Transverse colon (tissue), 4 donors: ENCODE measurements at regions of chr2 and their contacts with region 1.

Region 1: GRCh38 chr2:172102391-172103278 is at the start of gene DLX2:
- DNase-seq: peak; percentile 86
- H3K4me3 ChIP-seq: peak within 1 kb of the TSS; percentile 22 to 63 (median 42)
- H3K27ac ChIP-seq: no peak within 1 kb of the TSS
- H3K4me1 ChIP-seq: peaks cover 19 to 66% (median 54%) of the 10 kb centered on the region in 4 donors
- H3K27me3 ChIP-seq: peaks cover 100% of the 10 kb centered on the region
- CTCF ChIP-seq: no peak
- EP300 ChIP-seq: no peak
- POLR2A ChIP-seq: no peak
- total RNA-seq, gene DLX2: 0.16 TPM in 1 of 4 donors, not detected in the others

Region 2: GRCh38 chr2:171447675-171448074 is 655.0 kb before region 1 on chr2:
- in situ Hi-C with region 1: no loop called
- intact Hi-C with region 1: no loop called
- DNase-seq: no peak
- H3K4me3 ChIP-seq: no peak overlapping the region
- H3K27ac ChIP-seq: no peak overlapping the region
- H3K4me1 ChIP-seq: no peaks in the 10 kb centered on the region
- H3K27me3 ChIP-seq: no peaks in the 10 kb centered on the region
- CTCF ChIP-seq: no peak
- EP300 ChIP-seq: no peak
- POLR2A ChIP-seq: no peak

Region 3: DNA sequence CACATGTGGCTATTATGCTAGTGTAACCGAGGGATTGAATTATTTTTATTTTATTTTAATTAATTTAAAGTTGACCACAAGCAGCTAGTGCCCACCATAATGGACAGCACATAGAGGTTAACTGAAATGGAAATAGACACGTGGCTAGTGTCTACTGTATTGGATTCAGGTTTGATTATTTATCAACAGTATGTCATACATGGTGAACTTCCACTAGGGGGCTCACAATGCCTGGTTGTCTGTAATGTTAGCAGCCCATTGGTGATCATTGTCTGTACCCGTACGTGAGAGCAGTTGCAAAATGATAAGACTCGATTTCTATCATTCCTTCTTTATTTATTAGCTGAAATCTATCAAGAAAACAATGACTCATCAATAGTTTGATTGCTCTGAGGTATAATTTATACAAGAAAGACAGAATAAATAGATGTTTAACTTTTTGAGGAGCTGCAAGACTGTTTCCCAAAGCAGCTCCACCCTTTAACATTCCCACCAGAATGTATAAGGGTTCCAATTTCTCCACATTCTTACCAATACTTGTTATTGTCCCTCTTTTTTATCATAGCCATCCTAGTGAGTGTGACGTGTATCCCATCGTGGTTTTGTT is 503.8 kb before region 1 on chr2:
- in situ Hi-C with region 1: loop called (anchors 25 kb)
- intact Hi-C with region 1: no loop called
- DNase-seq: peak; percentile 34
- H3K4me3 ChIP-seq: no peak overlapping the region
- H3K27ac ChIP-seq: no peak overlapping the region
- H3K4me1 ChIP-seq: no peaks in the 10 kb centered on the region
- H3K27me3 ChIP-seq: peaks cover 14% of the 10 kb centered on the region
- CTCF ChIP-seq: peak; percentile 59 to 80 (median 63)
- EP300 ChIP-seq: no peak
- POLR2A ChIP-seq: no peak

Region 4: DNA sequence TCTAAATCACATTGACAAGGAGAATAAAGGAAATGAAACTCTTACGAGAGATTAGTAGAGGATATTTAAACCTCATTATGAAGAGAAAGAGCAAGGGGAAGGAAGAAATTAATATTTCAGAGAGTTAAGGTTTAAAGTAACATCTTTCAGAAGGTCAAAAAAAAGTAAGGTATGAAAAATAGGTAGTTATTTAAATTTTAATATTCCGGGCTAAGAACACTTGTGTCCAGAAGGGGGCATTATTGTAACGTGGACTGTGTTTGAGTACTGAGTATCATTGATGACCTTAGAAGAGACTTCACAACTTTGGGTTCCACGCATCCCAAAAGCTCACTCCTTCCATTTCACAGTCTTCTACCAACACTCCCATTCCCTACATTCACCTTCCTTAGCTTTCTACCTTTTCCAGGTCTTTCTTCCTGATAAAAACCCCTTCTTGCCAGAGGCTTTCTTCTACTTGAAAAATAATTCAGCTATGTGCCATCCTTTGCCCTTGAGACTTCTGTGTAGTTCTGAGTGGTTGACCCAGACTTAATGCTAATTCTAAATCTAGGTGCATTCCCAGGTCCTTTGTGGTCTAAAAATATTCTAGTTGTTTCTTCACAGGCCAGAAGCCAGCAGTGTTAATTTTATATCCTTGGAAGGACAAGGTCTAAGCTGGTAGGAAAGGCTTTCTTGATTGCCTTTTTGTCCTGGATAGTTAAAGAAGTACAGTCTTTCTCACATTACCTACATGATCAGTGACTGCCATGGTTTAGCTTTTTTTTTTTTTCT is 398.9 kb before region 1 on chr2:
- in situ Hi-C with region 1: loop called in 2 of 4 experiments (anchors 10 to 25 kb)
- intact Hi-C with region 1: loop called (anchors 10 kb)
- DNase-seq: no peak
- H3K4me3 ChIP-seq: no peak overlapping the region
- H3K27ac ChIP-seq: peak overlapping the region in 1 of 4 donors; percentile 13
- H3K4me1 ChIP-seq: peaks cover 0 to 17% (median 3%) of the 10 kb centered on the region in 4 donors
- H3K27me3 ChIP-seq: no peaks in the 10 kb centered on the region
- CTCF ChIP-seq: peak; percentile 24 to 32 (median 31)
- EP300 ChIP-seq: no peak
- POLR2A ChIP-seq: no peak

Region 5: GRCh38 chr2:171811245-171811628 is 291.4 kb before region 1 on chr2:
- in situ Hi-C with region 1: loop called in 1 of 4 experiments (anchors 25 kb)
- intact Hi-C with region 1: no loop called
- DNase-seq: no peak
- H3K4me3 ChIP-seq: no peak overlapping the region
- H3K27ac ChIP-seq: no peak overlapping the region
- H3K4me1 ChIP-seq: no peaks in the 10 kb centered on the region
- H3K27me3 ChIP-seq: no peaks in the 10 kb centered on the region
- CTCF ChIP-seq: peak in 1 of 5 experiments; percentile 19
- EP300 ChIP-seq: no peak
- POLR2A ChIP-seq: no peak

Region 6: DNA sequence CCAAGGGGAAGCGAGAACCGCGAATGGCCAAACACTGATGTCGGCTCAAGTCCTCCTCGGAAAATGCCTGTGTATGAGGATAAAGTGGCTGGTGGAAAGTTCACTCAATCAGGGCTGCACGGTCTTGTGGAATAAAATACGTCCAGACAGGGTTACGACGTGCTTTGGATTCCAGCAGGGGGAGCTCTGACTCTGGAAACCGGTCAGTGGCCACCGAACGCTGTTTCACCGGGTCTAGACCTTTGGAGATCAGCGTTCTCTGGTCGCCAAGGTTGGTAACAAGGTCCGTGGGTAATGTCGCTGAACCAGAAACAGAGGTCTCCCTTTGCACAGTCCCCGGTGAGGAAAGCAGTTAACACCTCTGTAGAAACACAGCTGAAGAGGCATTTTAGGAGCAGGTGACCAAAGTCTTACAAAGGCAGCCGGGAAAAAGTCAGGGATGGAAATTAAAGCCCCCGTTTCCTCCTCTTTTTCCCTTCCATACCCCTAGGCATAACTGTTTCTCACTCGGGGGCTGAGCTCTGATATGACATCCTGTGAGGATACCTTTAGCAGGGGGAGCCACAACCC is 1299.9 kb after region 1 on chr2:
- in situ Hi-C with region 1: no loop called
- intact Hi-C with region 1: loop called (anchors 5 kb)
- DNase-seq: peak; percentile 81
- H3K4me3 ChIP-seq: no peak overlapping the region
- H3K27ac ChIP-seq: no peak overlapping the region
- H3K4me1 ChIP-seq: peaks cover 0 to 15% (median 2%) of the 10 kb centered on the region in 4 donors
- H3K27me3 ChIP-seq: peaks cover 63% of the 10 kb centered on the region
- CTCF ChIP-seq: peak; percentile 78 to 87 (median 84)
- EP300 ChIP-seq: no peak
- POLR2A ChIP-seq: no peak